PC-9 (cell line): ENCODE measurements at regions of chr3 and their contacts with region 1.

Region 1: GRCh38 chr3:191425322-191425734 is 35.6 kb upstream of the PYDC2 start:
- DNase-seq: no peak
- H3K4me3 ChIP-seq: no peak overlapping the region
- H3K27ac ChIP-seq: no peak overlapping the region
- H3K4me1 ChIP-seq: peaks cover 6% of the 10 kb centered on the region
- H3K27me3 ChIP-seq: no peaks in the 10 kb centered on the region
- CTCF ChIP-seq: no peak

Region 2: GRCh38 chr3:191627064-191627463 is 201.7 kb after region 1 on chr3:
- CTCF ChIA-PET with region 1: no interaction called
- POLR2A ChIA-PET with region 1: interaction called, 17 read pairs
- intact Hi-C with region 1: no loop called
- DNase-seq: no peak
- H3K4me3 ChIP-seq: no peak overlapping the region
- H3K27ac ChIP-seq: no peak overlapping the region
- H3K4me1 ChIP-seq: no peaks in the 10 kb centered on the region
- H3K27me3 ChIP-seq: no peaks in the 10 kb centered on the region
- CTCF ChIP-seq: no peak

Region 3: GRCh38 chr3:191859531-191859930 is 434.2 kb after region 1 on chr3:
- CTCF ChIA-PET with region 1: interaction called, 11 read pairs
- POLR2A ChIA-PET with region 1: no interaction called
- intact Hi-C with region 1: no loop called
- DNase-seq: no peak
- H3K4me3 ChIP-seq: no peak overlapping the region
- H3K27ac ChIP-seq: no peak overlapping the region
- H3K4me1 ChIP-seq: no peaks in the 10 kb centered on the region
- H3K27me3 ChIP-seq: no peaks in the 10 kb centered on the region
- CTCF ChIP-seq: no peak

Region 4: GRCh38 chr3:192207651-192208050 is 782.3 kb after region 1 on chr3:
- CTCF ChIA-PET with region 1: interaction called, 12 read pairs
- POLR2A ChIA-PET with region 1: no interaction called
- intact Hi-C with region 1: no loop called
- DNase-seq: no peak
- H3K4me3 ChIP-seq: no peak overlapping the region
- H3K27ac ChIP-seq: no peak overlapping the region
- H3K4me1 ChIP-seq: no peaks in the 10 kb centered on the region
- H3K27me3 ChIP-seq: no peaks in the 10 kb centered on the region
- CTCF ChIP-seq: no peak